ENCODE measurements at regions of chr6 and their contacts with region 1.

Region 1: GRCh38 chr6:134058622-134059366 is 6.4 kb upstream of the SLC2A12 start:
- DNase-seq: no peak
- ATAC-seq: peak in 1 of 4 donors; percentile 52
- H3K4me3 ChIP-seq: no peak overlapping the region
- H3K27ac ChIP-seq: no peak overlapping the region
- H3K4me1 ChIP-seq: peaks cover 18% of the 10 kb centered on the region
- H3K27me3 ChIP-seq: no peaks in the 10 kb centered on the region
- CTCF ChIP-seq: no peak

Region 2: GRCh38 chr6:134021396-134022122 is 37.2 kb before region 1 on chr6:
- intact Hi-C with region 1: loop called in 1 of 2 experiments (anchors 5 kb)
- DNase-seq: no peak
- ATAC-seq: no peak
- H3K4me3 ChIP-seq: no peak overlapping the region
- H3K27ac ChIP-seq: no peak overlapping the region
- H3K4me1 ChIP-seq: peaks cover 12% of the 10 kb centered on the region
- H3K27me3 ChIP-seq: no peaks in the 10 kb centered on the region
- CTCF ChIP-seq: no peak